A549 (cell line): ENCODE measurements at regions of chr16 and their contacts with region 1.

Region 1: GRCh38 chr16:84186685-84187437 is at the start of gene TAF1C:
- DNase-seq: peak; percentile 94 to 97
- ATAC-seq: peak; percentile 92 to 95
- H3K4me3 ChIP-seq: peak within 1 kb of the TSS; percentile 84
- H3K27ac ChIP-seq: peak within 1 kb of the TSS; percentile 87 to 94
- H3K4me1 ChIP-seq: peaks cover 6% of the 10 kb centered on the region; the same call in 2 of the 3 replicates
- CTCF ChIP-seq: peak; percentile 91
- EP300 ChIP-seq: no peak
- POLR2A ChIP-seq: peak; percentile 75
- RAD21 ChIP-seq: peak; percentile 59 to 77
- polyA plus RNA-seq, gene TAF1C: 13.2 and 17.8 TPM in 2 replicates

Region 2: GRCh38 chr16:84084570-84085270 is 102.1 kb before region 1 on chr16:
- CTCF ChIA-PET with region 1: interaction called, 10 read pairs
- POLR2A ChIA-PET with region 1: no interaction called
- DNase-seq: peak; percentile 79 to 89
- ATAC-seq: peak; percentile 91 to 96
- H3K4me3 ChIP-seq: no peak overlapping the region
- H3K27ac ChIP-seq: no peak overlapping the region
- H3K4me1 ChIP-seq: no peaks in the 10 kb centered on the region
- CTCF ChIP-seq: peak; percentile 80
- EP300 ChIP-seq: no peak
- POLR2A ChIP-seq: no peak
- RAD21 ChIP-seq: peak; percentile 70 to 73

Region 3: DNA sequence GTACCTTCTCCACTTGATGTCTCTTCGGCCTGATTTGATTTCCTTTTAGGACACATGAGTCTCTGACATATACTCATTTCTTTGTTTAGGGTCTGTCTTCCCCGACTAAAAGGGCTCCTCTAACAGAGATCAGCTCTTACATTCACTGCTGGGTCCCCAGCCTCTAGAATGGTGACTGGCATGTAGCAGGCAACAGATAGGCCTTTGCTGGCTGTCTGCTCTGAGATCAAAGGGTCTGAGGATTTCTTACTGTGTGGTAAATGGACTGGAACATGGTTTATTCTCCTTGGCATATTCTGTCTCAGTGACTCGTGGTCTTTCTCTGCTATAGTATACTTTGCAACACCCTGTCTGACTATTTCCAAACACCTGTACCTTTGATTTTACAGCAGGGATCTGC is 25.1 kb before region 1 on chr16:
- CTCF ChIA-PET with region 1: interaction called, 12 read pairs
- POLR2A ChIA-PET with region 1: interaction called, 5 read pairs
- DNase-seq: no peak
- ATAC-seq: no peak
- H3K4me3 ChIP-seq: no peak overlapping the region
- H3K27ac ChIP-seq: no peak overlapping the region
- H3K4me1 ChIP-seq: no peaks in the 10 kb centered on the region
- CTCF ChIP-seq: no peak
- EP300 ChIP-seq: no peak
- POLR2A ChIP-seq: no peak
- RAD21 ChIP-seq: no peak

Region 4: DNA sequence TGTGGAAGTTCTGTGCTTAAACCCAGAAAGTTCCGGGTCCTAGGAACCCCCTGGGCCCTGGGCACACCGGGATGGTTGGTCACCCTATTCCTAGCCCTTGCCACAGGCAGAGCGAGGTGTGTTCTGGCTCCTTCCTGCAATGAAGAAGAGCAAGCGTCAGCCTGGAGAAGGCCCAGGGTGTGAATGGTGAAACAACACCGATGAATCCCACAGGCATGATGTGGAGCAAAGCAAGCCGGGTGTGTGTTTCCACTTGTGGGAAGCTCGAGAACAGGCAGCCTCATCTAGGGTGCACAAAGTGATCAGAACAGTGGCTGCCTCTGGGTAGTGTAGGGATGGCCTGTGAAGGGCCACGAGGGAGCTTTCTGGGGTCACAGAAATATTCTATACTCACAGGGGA is 39.2 kb after region 1 on chr16:
- CTCF ChIA-PET with region 1: interaction called, 13 read pairs
- POLR2A ChIA-PET with region 1: interaction called, 3 read pairs
- DNase-seq: no peak
- ATAC-seq: no peak
- H3K4me3 ChIP-seq: no peak overlapping the region
- H3K27ac ChIP-seq: peak overlapping the region in 1 of 2 experiments; percentile 92; a peak in 3 of 6 replicates
- H3K4me1 ChIP-seq: peaks cover 20% of the 10 kb centered on the region
- CTCF ChIP-seq: no peak
- EP300 ChIP-seq: no peak
- POLR2A ChIP-seq: no peak
- RAD21 ChIP-seq: no peak

Region 5: DNA sequence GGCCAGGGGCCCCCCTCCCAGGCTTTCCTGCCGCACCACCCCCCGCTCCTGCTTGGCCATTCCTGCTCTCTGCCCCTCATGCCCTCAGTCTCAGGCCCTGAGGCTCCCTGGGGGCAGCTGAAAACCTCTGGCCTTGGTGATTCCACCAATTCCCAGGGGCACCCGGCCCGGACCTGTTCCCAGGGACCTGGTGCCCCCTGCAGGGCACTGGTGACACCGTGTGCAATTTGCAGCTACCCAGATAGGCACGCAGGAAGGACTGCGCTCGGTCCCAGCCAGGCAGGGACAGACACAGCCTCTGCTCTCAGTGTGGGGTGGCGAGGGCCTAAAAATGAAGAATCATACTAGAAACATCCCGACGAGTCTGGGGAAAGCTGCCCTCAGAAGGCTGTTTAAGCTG is 121.3 kb after region 1 on chr16:
- CTCF ChIA-PET with region 1: interaction called, 29 read pairs
- POLR2A ChIA-PET with region 1: no interaction called
- DNase-seq: peak; percentile 64
- ATAC-seq: peak; percentile 87 to 96
- H3K4me3 ChIP-seq: no peak overlapping the region
- H3K27ac ChIP-seq: no peak overlapping the region
- H3K4me1 ChIP-seq: no peaks in the 10 kb centered on the region
- CTCF ChIP-seq: peak; percentile 64
- EP300 ChIP-seq: no peak
- POLR2A ChIP-seq: no peak
- RAD21 ChIP-seq: peak; percentile 72 to 81

Region 6: GRCh38 chr16:84484579-84485254 is 297.9 kb after region 1 on chr16:
- CTCF ChIA-PET with region 1: interaction called, 92 read pairs
- POLR2A ChIA-PET with region 1: no interaction called
- DNase-seq: peak; percentile 47 to 62
- ATAC-seq: peak; percentile 68 to 87; a peak in 4 of 6 replicates
- H3K4me3 ChIP-seq: no peak overlapping the region
- H3K27ac ChIP-seq: no peak overlapping the region
- H3K4me1 ChIP-seq: no peaks in the 10 kb centered on the region
- CTCF ChIP-seq: peak; percentile 85
- EP300 ChIP-seq: no peak
- POLR2A ChIP-seq: no peak
- RAD21 ChIP-seq: peak; percentile 95 to 96